ENCODE measurements at regions of chr16 and their contacts with region 1.

Region 1: DNA sequence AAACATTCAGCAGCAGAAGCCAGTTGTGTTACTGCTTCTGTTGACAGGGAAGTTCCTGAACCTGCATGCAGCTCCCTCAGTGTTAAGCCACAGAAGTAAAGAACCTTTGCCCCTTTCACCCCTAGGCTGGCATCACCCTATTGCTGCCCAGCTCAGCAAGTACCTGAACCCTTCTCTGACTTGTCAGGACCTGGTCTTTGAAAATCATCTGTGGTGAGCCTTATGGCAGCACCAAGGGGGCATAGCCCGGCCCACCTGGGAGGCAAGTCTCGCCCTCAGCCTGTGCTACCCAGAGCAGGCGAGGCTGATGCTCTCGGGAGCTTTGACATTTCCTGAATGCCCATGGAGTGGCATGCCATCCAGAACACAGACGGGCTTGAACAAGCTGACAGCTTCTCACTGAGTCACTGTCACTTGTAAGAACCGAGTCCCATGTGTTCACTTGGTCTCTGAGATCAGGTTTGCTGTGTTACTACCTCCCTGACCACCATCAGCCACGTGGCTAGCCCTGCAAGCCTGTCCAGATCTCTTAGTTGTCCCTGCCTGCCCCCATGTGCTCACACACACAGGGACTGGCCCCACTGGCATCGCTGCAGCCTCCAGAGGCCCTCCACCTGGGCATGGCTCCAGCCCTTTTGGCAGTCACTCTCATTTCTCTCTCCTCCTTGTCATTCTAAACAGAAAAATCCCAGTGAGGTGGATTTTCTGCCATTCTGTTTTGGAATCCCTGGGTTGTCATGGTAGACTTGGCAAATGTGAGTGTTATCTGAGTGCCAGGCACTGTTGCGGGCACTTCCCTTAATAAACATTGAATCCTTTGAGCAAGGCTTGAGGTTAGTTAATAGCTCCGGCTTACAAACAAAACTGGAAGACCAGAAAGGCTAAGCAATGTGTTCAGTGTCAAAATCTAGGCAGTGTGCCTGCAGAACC is 2.9 kb upstream of the CARMIL2 start:
- DNase-seq: no peak
- ATAC-seq: no peak
- H3K4me3 ChIP-seq: no peak overlapping the region
- H3K4me3 Mint-ChIP-seq: no peak overlapping the region
- H3K27ac ChIP-seq: no peak overlapping the region
- H3K27ac Mint-ChIP-seq: peak overlapping the region in 2 of 9 donors; percentile 55 to 75
- H3K4me1 ChIP-seq: peaks cover 9 to 15% of the 10 kb centered on the region in 2 donors
- H3K4me1 Mint-ChIP-seq: peaks cover 0 to 24% (median 13%) of the 10 kb centered on the region in 7 donors
- H3K27me3 ChIP-seq: no peaks in the 10 kb centered on the region
- H3K27me3 Mint-ChIP-seq: no peaks in the 10 kb centered on the region

Region 2: GRCh38 chr16:67490335-67491096 is 151.5 kb before region 1 on chr16:
- CTCF ChIA-PET with region 1: interaction called, 3 read pairs
- POLR2A ChIA-PET with region 1: no interaction called
- intact Hi-C with region 1: loop called in 1 of 2 experiments (anchors 5 kb)
- DNase-seq: no peak
- ATAC-seq: peak; percentile 25
- H3K4me3 ChIP-seq: no peak overlapping the region
- H3K4me3 Mint-ChIP-seq: no peak overlapping the region
- H3K27ac ChIP-seq: no peak overlapping the region
- H3K27ac Mint-ChIP-seq: peak overlapping the region in 5 of 9 donors; percentile 28 to 68 (median 49)
- H3K4me1 ChIP-seq: peaks cover 3 to 5% of the 10 kb centered on the region in 2 donors
- H3K4me1 Mint-ChIP-seq: peaks cover 9 to 27% (median 20%) of the 10 kb centered on the region in 7 donors
- H3K27me3 ChIP-seq: no peaks in the 10 kb centered on the region
- H3K27me3 Mint-ChIP-seq: no peaks in the 10 kb centered on the region

Region 3: GRCh38 chr16:67546761-67547422 is 95.2 kb before region 1 on chr16:
- CTCF ChIA-PET with region 1: interaction called, 107 read pairs
- POLR2A ChIA-PET with region 1: interaction called, 128 read pairs
- intact Hi-C with region 1: loop called (anchors 1 kb)
- DNase-seq: peak; percentile 57 to 78 (median 70)
- ATAC-seq: peak; percentile 55
- H3K4me3 ChIP-seq: peak overlapping the region; percentile 56
- H3K4me3 Mint-ChIP-seq: peak overlapping the region; percentile 75 to 92 (median 86)
- H3K27ac ChIP-seq: peak overlapping the region; percentile 70
- H3K27ac Mint-ChIP-seq: peak overlapping the region; percentile 59 to 99 (median 97)
- H3K4me1 ChIP-seq: peaks cover 19 to 40% of the 10 kb centered on the region in 2 donors
- H3K4me1 Mint-ChIP-seq: peaks cover 25 to 56% (median 51%) of the 10 kb centered on the region in 7 donors
- H3K27me3 ChIP-seq: no peaks in the 10 kb centered on the region
- H3K27me3 Mint-ChIP-seq: no peaks in the 10 kb centered on the region

Region 4: GRCh38 chr16:67555795-67556212 is 86.2 kb before region 1 on chr16:
- CTCF ChIA-PET with region 1: interaction called, 11 read pairs
- POLR2A ChIA-PET with region 1: interaction called, 80 read pairs
- intact Hi-C with region 1: no loop called
- DNase-seq: peak in 7 of 9 donors; percentile 34 to 63 (median 50)
- ATAC-seq: peak; percentile 89
- H3K4me3 ChIP-seq: peak overlapping the region; percentile 19
- H3K4me3 Mint-ChIP-seq: peak overlapping the region; percentile 13 to 81 (median 60)
- H3K27ac ChIP-seq: peak overlapping the region; percentile 52
- H3K27ac Mint-ChIP-seq: peak overlapping the region; percentile 75 to 99 (median 92)
- H3K4me1 ChIP-seq: peaks cover 18 to 52% of the 10 kb centered on the region in 2 donors
- H3K4me1 Mint-ChIP-seq: peaks cover 27 to 71% (median 54%) of the 10 kb centered on the region in 7 donors
- H3K27me3 ChIP-seq: no peaks in the 10 kb centered on the region
- H3K27me3 Mint-ChIP-seq: no peaks in the 10 kb centered on the region

Region 5: DNA sequence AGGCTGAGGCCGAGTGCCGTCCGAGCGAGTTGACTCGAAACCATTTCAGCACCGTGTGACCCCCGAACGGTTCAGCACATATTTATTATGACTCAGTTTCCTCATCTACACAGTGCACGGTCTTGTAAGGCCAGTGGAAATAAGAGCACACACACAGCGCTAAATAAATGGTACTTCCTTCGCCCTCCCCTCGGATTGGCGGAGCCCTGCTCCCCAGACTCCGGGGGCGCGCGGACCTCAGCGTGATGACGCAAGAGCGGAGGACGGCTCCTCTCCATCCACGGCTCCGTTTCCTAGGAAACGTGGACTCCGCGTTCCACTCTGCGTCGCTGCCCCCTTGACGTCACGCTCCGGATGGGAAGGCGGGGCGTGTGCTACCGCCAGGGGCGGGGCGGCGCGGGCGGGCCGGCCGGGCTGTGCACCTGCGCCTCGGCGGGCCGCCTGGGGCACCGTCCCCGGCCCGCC is 18.6 kb after region 1 on chr16 and contains the start of gene PARD6A:
- CTCF ChIA-PET with region 1: interaction called, 7 read pairs
- POLR2A ChIA-PET with region 1: interaction called, 84 read pairs
- intact Hi-C with region 1: loop called (anchors 1 to 2 kb)
- DNase-seq: peak; percentile 81 to 95 (median 93)
- ATAC-seq: peak; percentile 89
- H3K4me3 ChIP-seq: peak within 1 kb of the TSS; percentile 99
- H3K4me3 Mint-ChIP-seq: peak within 1 kb of the TSS; percentile 90 to 97 (median 94)
- H3K27ac ChIP-seq: peak within 1 kb of the TSS; percentile 97
- H3K27ac Mint-ChIP-seq: peak within 1 kb of the TSS; percentile 84 to 98 (median 97)
- H3K4me1 ChIP-seq: peaks cover 11 to 17% of the 10 kb centered on the region in 2 donors
- H3K4me1 Mint-ChIP-seq: peaks cover 15 to 40% (median 22%) of the 10 kb centered on the region in 7 donors
- H3K27me3 ChIP-seq: no peaks in the 10 kb centered on the region
- H3K27me3 Mint-ChIP-seq: no peaks in the 10 kb centered on the region
- total RNA-seq, gene PARD6A: 4.5 to 11.2 (median 4.7) TPM